ENCODE measurements at regions of chr4 and their contacts with region 1.

Region 1: DNA sequence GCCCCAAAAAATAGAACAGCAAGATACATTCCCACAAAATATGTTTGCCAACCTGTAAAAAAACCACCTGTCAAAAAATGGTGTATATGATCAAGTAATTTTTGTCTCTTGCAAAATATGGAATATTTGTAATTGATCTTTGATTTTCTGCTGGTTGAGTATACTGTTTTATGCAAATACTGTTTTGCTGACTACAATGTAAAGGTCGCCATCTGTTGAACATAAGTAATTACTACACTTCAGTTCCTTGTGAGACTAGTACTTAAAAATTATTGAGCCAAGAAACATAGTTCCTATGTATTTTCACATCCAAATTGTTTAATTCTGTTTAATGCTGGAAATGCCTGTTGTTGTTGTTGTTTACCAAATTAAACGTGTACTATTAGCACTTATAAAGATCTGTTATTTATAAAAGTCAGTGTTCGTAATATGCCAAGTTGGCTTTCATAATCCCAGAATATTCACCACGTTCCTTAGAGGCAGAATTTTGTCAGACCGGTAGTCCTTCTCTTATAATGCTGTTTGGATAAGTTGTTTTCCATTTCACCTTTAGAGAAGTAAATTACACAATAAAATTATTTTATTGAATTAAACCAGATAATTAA is 144.2 kb downstream of the PDLIM5 start:
- DNase-seq: peak; percentile 42
- H3K4me3 ChIP-seq: no peak overlapping the region
- H3K27ac ChIP-seq: no peak overlapping the region
- H3K4me1 ChIP-seq: no peaks in the 10 kb centered on the region
- CTCF ChIP-seq: peak; percentile 87

Region 2: GRCh38 chr4:94406668-94407437 is 189.1 kb before region 1 on chr4:
- CTCF ChIA-PET with region 1: no interaction called
- POLR2A ChIA-PET with region 1: no interaction called
- intact Hi-C with region 1: loop called (anchors 1 kb)
- DNase-seq: peak; percentile 70
- H3K4me3 ChIP-seq: no peak overlapping the region
- H3K27ac ChIP-seq: no peak overlapping the region
- H3K4me1 ChIP-seq: no peaks in the 10 kb centered on the region
- CTCF ChIP-seq: peak; percentile 96